Left cardiac atrium (tissue), 4 donors: ENCODE measurements at regions of chr2 and their contacts with region 1.

Region 1: GRCh38 chr2:42878581-42878980 is 86.2 kb upstream of the HAAO start:
- DNase-seq: no peak
- ATAC-seq: no peak

Region 2: GRCh38 chr2:42928692-42929545 is 50.3 kb after region 1 on chr2:
- intact Hi-C with region 1: loop called (anchors 5 to 10 kb)
- DNase-seq: peak; percentile 24
- ATAC-seq: no peak

Region 3: DNA sequence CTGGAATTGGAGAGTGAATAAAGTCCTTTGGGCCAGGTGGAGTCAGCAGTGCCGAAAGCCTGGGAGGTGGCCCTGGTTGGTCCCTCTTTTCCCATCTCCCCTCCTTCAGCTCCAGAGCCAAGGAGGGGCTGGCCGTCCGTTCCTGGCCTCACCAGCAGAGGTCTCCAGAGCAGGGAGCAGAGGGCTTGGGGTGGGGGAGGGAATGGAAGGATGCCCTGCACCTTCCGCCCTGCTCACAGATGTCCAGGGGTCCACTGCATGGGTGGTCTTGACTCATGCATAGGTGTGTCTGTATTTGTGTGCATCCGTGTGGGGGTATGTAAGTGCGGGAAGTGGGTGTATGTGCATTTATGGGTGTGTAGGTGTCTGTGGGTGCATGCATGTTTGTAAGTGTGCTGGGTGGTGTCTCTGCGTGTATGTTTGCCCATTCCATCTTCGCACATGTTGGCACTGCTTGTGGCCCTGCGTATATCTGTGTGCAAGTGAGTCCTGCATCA is 146.0 kb after region 1 on chr2:
- intact Hi-C with region 1: no loop called
- DNase-seq: peak; percentile 73
- ATAC-seq: peak; percentile 71 to 79

Region 4: GRCh38 chr2:43059183-43059897 is 180.8 kb after region 1 on chr2:
- intact Hi-C with region 1: no loop called
- DNase-seq: peak; percentile 82
- ATAC-seq: peak; percentile 93